Panc1 (cell line): ENCODE measurements at regions of chr7 and their contacts with region 1.

Region 1: GRCh38 chr7:139271718-139272628 is 40.9 kb downstream of the UBN2 start:
- DNase-seq: no peak
- ATAC-seq: no peak
- H3K4me3 ChIP-seq: no peak overlapping the region
- H3K27ac ChIP-seq: no peak overlapping the region
- H3K4me1 ChIP-seq: no peaks in the 10 kb centered on the region
- H3K27me3 ChIP-seq: no peaks in the 10 kb centered on the region
- CTCF ChIP-seq: no peak

Region 2: GRCh38 chr7:138849701-138850100 is 422.3 kb before region 1 on chr7:
- CTCF ChIA-PET with region 1: no interaction called
- POLR2A ChIA-PET with region 1: interaction called, 14 read pairs
- in situ Hi-C with region 1: no loop called
- intact Hi-C with region 1: no loop called
- DNase-seq: no peak
- ATAC-seq: no peak
- H3K4me3 ChIP-seq: no peak overlapping the region
- H3K27ac ChIP-seq: no peak overlapping the region
- H3K4me1 ChIP-seq: no peaks in the 10 kb centered on the region
- H3K27me3 ChIP-seq: no peaks in the 10 kb centered on the region
- CTCF ChIP-seq: no peak